ENCODE measurements at regions of chr22 and their contacts with region 1.

Region 1: GRCh38 chr22:30754971-30755756 is 60.5 kb downstream of the OSBP2 start:
- DNase-seq: peak; percentile 51 to 61 (median 58)
- ATAC-seq: peak; percentile 60
- H3K4me3 ChIP-seq: no peak overlapping the region
- H3K27ac ChIP-seq: no peak overlapping the region
- H3K4me1 ChIP-seq: no peaks in the 10 kb centered on the region
- H3K27me3 ChIP-seq: no peaks in the 10 kb centered on the region
- CTCF ChIP-seq: peak in 6 of 7 experiments; percentile 25 to 63 (median 56)
- POLR2A ChIP-seq: no peak

Region 2: DNA sequence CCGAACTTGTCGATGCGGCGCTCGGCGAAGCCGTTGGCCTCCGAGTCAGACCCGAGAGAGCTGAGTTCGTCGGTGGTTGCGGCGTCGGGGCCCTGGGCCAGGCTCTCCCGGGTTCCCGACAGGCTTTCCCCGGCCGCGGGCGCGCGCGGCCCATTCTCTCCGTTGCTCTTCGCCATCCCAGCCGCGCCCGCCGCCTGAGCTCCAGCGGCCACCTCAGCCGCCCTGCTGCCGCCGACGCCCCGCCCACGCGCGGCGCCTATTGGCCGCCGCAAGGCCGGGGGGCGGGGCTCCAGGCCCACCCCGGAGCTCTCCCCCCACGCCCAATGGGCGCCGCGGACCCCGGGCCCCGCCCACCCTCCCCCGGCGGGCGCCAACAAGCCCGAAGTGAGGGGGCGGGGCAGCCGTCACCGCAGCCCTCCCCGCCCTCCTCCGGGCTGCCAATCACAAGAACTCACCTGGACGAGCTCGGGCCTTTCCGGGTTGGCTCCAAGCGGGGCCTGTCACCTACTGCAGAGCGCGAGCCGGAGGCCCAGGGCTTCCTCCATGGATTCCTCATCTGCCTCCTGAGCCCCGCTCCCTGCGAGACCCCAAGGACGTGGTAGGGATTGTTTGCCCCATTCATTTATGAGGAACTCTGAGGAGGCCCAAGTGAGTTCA is 428.3 kb before region 1 on chr22 and contains the start of gene TBC1D10A:
- intact Hi-C with region 1: no loop called
- DNase-seq: peak; percentile 97 to 98 (median 98)
- ATAC-seq: peak; percentile 94
- H3K4me3 ChIP-seq: peak within 1 kb of the TSS; percentile 76 to 86
- H3K27ac ChIP-seq: peak within 1 kb of the TSS; percentile 78 to 94 (median 86)
- H3K4me1 ChIP-seq: peaks cover 42% of the 10 kb centered on the region
- H3K27me3 ChIP-seq: no peaks in the 10 kb centered on the region
- CTCF ChIP-seq: peak in 1 of 7 experiments; percentile 21
- POLR2A ChIP-seq: peak; percentile 84 to 88 (median 87)
- total RNA-seq, gene TBC1D10A: 4.3 to 15.0 TPM

Region 3: DNA sequence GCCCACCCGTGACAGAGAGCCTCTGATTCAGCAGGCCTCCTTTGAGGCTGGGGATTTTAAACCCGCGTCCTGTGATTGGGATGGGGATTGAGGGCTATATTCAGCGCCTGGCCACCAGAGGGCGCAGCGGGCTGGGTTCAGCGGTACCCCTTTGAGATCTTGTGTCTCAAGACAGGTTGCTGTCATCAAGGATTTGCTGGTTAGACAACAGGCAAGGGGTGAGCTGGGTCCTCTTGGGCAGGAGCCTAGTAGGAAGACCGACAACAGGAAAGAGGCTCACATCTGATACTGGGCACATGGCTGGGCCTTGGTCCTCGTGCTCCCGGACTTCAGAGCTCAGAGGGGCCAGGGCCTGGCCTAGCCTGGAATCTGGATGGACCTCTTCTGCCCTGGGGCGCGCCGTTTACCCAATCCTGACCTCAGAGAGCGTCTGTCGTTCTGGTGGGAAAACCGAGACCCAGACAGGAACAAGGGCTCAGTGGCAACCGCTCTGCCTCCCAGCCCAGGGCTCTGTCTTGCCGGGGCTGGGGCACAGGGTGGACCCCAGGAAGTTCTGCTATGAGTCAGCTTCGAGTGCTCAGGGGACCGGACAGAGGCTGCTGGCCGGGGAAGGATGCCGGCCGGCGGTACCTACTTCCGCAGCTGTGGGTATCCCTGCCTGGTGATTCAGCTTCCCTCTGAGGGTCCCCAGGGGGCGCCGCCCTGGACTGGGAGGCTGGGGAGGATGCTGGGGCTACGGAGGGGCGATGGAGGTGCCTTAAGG is 120.5 kb before region 1 on chr22:
- intact Hi-C with region 1: loop called (anchors 5 kb)
- DNase-seq: peak; percentile 80 to 83 (median 81)
- ATAC-seq: peak; percentile 66
- H3K4me3 ChIP-seq: no peak overlapping the region
- H3K27ac ChIP-seq: peak overlapping the region; percentile 72 to 86 (median 81)
- H3K4me1 ChIP-seq: peaks cover 34% of the 10 kb centered on the region
- H3K27me3 ChIP-seq: no peaks in the 10 kb centered on the region
- CTCF ChIP-seq: peak; percentile 83 to 95 (median 91)
- POLR2A ChIP-seq: peak in 1 of 3 donors; percentile 3